Heart right ventricle (tissue), 16 donors: ENCODE measurements at regions of chr12 and their contacts with region 1.

Region 1: GRCh38 chr12:2057041-2057794 is 4.4 kb downstream of the CACNA1C start:
- DNase-seq: peak; percentile 66 to 69
- ATAC-seq: peak in 6 of 8 donors; percentile 9 to 37 (median 23)
- H3K4me3 ChIP-seq: peak overlapping the region in 3 of 10 donors; percentile 5 to 9 (median 8)
- H3K27ac ChIP-seq: peak overlapping the region in 8 of 10 donors; percentile 17 to 68 (median 46)
- H3K4me1 ChIP-seq: peaks cover 5 to 85% (median 43%) of the 10 kb centered on the region in 9 donors
- H3K27me3 ChIP-seq: peaks cover 0 to 37% (median 0%) of the 10 kb centered on the region in 7 donors
- CTCF ChIP-seq: peak; percentile 55 to 80 (median 73)

Region 2: GRCh38 chr12:1297206-1297605 is 760.0 kb before region 1 on chr12:
- intact Hi-C with region 1: no loop called
- DNase-seq: no peak
- ATAC-seq: no peak
- H3K4me3 ChIP-seq: no peak overlapping the region
- H3K27ac ChIP-seq: no peak overlapping the region
- H3K4me1 ChIP-seq: no peaks in the 10 kb centered on the region
- H3K27me3 ChIP-seq: no peaks in the 10 kb centered on the region
- CTCF ChIP-seq: no peak

Region 3: DNA sequence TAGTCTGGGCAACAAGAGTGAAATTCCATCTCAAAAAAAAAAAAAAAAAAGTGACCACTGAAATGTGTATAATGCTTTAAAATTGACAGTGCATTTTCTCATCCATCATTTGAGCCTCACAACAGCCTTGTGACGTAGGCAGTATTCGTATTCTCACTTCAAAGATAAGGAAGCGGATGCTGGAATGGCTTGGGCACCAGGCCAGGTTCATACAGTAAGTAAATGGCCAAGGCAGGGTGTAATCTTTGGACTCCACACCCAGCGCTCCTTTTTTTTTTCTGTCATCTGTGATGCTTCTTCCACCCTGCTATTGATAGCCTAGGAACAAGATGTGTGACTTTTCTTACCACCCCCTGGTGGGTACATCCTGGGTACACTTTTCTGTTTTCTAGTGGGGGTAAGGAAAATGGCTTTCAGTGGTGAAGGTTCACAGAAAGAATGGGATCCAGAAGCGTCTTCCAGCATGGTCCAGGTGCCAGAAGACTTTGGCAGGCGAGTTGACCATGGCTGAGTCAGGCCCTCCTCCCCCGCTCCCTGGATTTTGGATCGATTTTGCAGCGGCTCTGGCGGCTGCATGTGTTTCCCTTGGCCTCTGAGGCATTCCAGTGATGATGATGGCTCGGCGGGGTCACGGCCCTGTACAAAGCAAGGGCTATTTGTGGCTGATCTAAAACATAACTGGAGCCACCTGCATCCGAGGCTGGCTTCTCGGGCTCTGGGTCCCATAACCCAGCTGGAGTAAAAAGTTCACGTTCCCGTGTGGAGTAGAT is 106.1 kb after region 1 on chr12:
- intact Hi-C with region 1: loop called in 3 of 10 experiments (anchors 5 to 10 kb)
- DNase-seq: peak; percentile 85 to 93
- ATAC-seq: peak; percentile 85 to 95 (median 92)
- H3K4me3 ChIP-seq: no peak overlapping the region
- H3K27ac ChIP-seq: peak overlapping the region; percentile 47 to 94 (median 81)
- H3K4me1 ChIP-seq: peaks cover 23 to 67% (median 44%) of the 10 kb centered on the region in 9 donors
- H3K27me3 ChIP-seq: no peaks in the 10 kb centered on the region
- CTCF ChIP-seq: peak in 1 of 9 donors; percentile 11

Region 4: GRCh38 chr12:2212971-2213869 is 156.0 kb after region 1 on chr12:
- intact Hi-C with region 1: loop called in 1 of 10 experiments (anchors 10 kb)
- DNase-seq: no peak
- ATAC-seq: peak; percentile 22 to 76 (median 56)
- H3K4me3 ChIP-seq: no peak overlapping the region
- H3K27ac ChIP-seq: peak overlapping the region; percentile 24 to 79 (median 62)
- H3K4me1 ChIP-seq: peaks cover 11 to 90% (median 63%) of the 10 kb centered on the region in 9 donors
- H3K27me3 ChIP-seq: peaks cover 0 to 4% (median 0%) of the 10 kb centered on the region in 7 donors
- CTCF ChIP-seq: no peak

Region 5: DNA sequence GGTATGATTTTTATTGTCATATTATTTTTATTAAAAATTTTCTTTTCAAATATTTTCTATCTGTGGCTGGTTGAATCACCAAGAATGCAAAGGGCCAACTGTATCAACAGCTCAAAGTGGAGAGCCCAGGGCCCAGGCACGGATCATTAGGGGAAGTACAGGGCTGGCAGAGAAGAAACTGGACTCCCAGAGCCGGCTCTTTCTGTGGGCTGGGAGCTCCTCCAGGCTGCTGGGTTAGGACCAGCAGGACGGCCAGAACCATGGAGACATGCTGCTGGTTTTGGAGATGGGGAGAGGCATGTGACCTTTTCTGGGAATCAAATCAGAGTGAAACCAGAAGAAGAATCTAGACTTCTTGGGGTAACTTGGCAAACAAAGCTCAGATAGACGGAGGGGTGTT is 216.1 kb after region 1 on chr12:
- intact Hi-C with region 1: loop called in 4 of 10 experiments (anchors 5 kb)
- DNase-seq: peak in 1 of 2 donors; percentile 50
- ATAC-seq: peak; percentile 56 to 77 (median 66)
- H3K4me3 ChIP-seq: no peak overlapping the region
- H3K27ac ChIP-seq: peak overlapping the region in 5 of 10 donors; percentile 8 to 64 (median 19)
- H3K4me1 ChIP-seq: peaks cover 5 to 76% (median 38%) of the 10 kb centered on the region in 9 donors
- H3K27me3 ChIP-seq: no peaks in the 10 kb centered on the region
- CTCF ChIP-seq: peak in 6 of 9 donors; percentile 22 to 66 (median 54)